Activated naive CD4-positive, alpha-beta T cell treated with anti-CD3 and anti-CD28 coated beads for 36 hours (primary cell): ENCODE measurements at regions of chr1 and their contacts with region 1.

Region 1: GRCh38 chr1:115275212-115275611 is 62.8 kb downstream of the NGF start:
- DNase-seq: no peak
- H3K4me3 Mint-ChIP-seq: no peak overlapping the region
- H3K27ac Mint-ChIP-seq: no peak overlapping the region
- H3K4me1 Mint-ChIP-seq: peaks cover 2% of the 10 kb centered on the region
- H3K27me3 Mint-ChIP-seq: peaks cover 12% of the 10 kb centered on the region

Region 2: DNA sequence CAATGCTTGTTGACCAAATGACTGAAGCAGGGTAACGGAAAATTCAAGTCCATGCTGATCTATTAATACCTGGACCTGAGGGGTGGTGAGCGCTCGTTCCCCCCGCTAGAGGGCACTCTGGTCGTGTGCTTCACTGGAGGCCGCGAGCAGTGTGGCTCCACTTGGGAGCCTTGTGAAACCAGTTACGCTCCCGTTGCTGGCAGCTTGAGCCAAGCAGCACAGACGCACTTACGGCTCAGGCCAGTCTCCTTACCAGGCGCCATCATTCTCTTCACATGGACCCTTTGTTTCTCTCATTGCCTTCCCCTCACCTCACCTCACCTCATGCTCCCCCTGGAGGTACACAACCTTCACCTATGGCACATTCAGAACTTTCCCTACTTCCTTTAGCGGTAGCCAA is 136.2 kb before region 1 on chr1:
- CTCF ChIA-PET with region 1: interaction called, 3 read pairs
- intact Hi-C with region 1: loop called (anchors 5 kb)
- DNase-seq: peak; percentile 72
- H3K4me3 Mint-ChIP-seq: peak overlapping the region; percentile 3
- H3K27ac Mint-ChIP-seq: no peak overlapping the region
- H3K4me1 Mint-ChIP-seq: peaks cover 3% of the 10 kb centered on the region
- H3K27me3 Mint-ChIP-seq: peaks cover 21% of the 10 kb centered on the region

Region 3: GRCh38 chr1:115469703-115470476 is 194.7 kb after region 1 on chr1:
- CTCF ChIA-PET with region 1: interaction called, 3 read pairs
- intact Hi-C with region 1: loop called (anchors 1 kb)
- DNase-seq: peak; percentile 42
- H3K4me3 Mint-ChIP-seq: no peak overlapping the region
- H3K27ac Mint-ChIP-seq: no peak overlapping the region
- H3K4me1 Mint-ChIP-seq: peaks cover 3% of the 10 kb centered on the region
- H3K27me3 Mint-ChIP-seq: peaks cover 11% of the 10 kb centered on the region

Region 4: DNA sequence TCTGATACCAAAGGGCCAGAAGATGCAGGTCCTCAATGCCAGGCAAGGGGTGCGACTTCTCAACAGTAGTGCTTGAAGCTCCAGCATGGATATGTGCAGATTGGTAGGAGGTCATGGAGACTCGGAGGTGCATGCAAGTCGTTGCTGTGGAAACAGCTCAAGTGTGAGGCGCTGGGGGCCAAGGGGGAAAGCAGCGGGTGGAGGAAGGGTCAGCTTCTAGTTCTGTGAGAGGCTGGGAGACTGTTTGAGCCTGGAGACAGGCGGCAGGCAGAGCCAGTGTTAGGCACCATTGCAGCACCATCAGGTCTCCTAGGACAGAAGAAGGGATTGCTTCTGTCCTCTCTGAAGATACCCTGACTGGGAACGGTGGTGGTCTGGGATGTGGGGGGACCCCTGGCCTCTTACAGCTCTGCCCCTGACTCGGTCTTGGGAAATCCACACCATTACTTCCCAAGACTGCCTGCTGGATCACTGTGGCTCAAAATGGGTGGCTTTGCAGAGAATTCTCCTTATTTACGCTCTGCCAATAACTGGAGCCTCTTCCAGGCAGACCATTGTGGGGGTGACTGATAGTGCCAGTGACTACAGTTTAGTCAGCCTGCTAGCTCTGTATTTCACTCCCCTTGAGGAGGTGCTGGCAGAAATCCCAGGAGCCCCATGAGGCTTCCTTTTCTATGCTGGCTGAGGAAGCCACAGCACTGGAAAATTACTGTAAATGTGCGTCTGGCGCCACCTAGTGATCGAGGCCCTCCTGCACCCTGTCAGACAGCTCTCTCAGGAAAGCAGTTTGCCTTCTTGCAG is 320.3 kb after region 1 on chr1:
- CTCF ChIA-PET with region 1: interaction called, 3 read pairs
- intact Hi-C with region 1: loop called (anchors 10 kb)
- DNase-seq: peak; percentile 82
- H3K4me3 Mint-ChIP-seq: no peak overlapping the region
- H3K27ac Mint-ChIP-seq: no peak overlapping the region
- H3K4me1 Mint-ChIP-seq: no peaks in the 10 kb centered on the region
- H3K27me3 Mint-ChIP-seq: peaks cover 3% of the 10 kb centered on the region